H1 (cell line): ENCODE measurements at regions of chr1 and their contacts with region 1.

Region 1: DNA sequence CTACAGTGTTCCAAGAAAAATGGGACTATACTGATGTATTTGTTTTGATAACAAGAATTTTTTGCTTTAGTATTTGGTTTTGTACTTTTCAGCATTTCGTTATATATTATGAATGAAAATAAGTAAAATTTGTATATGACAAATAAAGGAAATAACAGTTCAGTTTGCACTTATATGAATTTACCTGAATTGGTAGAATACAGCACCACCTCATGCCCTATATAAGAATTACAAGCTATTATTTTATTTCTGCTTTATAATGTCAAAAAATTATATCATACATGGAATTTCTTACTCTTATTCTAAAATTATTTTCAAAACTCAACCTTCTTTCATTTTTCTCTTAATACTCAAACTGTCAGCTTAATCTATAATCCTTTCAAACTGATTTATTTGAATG is 14.6 kb downstream of the EFCAB7 start:
- DNase-seq: no peak
- H3K4me3 ChIP-seq: no peak overlapping the region
- H3K27ac ChIP-seq: no peak overlapping the region
- H3K4me1 ChIP-seq: peaks cover 0 to 4% (median 1%) of the 10 kb centered on the region in 4 experiments; a peak in 2 of 7 replicates
- H3K27me3 ChIP-seq: no peaks in the 10 kb centered on the region
- CTCF ChIP-seq: no peak; a peak in 1 of 4 replicates
- EP300 ChIP-seq: no peak
- POLR2A ChIP-seq: no peak
- RAD21 ChIP-seq: peak in 1 of 2 experiments; percentile 30; a peak in 2 of 4 replicates

Region 2: DNA sequence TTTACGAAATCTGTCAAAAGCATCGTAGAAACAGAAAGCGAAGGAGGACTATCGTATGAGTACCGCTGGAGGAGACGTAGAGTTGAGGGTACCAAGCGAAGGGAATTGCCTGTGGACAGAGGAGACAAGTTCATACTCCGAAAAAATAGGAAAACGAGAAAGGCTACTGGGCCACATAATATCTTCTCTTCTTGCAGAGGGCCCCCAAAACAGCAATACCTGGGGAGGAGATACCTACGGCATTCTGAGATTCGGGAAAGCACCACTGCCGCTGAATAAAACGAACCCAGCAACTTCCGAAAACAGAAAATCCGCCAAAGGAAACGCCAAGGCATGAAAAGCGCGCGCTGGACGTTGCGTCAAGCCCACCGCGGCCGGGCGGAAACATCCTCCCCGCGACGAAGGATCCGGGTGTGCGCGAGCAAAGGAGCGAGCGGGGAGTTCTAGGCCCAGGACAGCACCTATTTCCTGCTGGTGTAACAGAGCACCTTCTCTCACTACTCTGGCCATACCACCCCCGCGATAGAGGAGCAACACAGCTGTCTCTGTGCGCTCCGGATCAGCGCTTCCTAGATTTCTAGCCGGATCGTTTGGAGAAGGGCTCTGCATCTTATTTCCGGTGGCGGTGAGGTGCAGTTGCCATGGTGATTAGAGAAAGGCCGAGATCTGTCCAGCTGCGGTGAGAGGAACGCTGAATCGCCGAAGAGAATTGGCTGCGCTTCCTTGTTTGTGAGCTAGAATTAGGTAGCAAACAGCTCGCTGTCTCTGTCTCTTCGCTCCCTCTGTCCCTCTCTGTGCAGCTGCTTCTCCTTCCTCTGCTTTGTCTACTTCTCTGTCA is 14.8 kb before region 1 on chr1 and contains the starts of genes EFCAB7 and ITGB3BP:
- CTCF ChIA-PET with region 1: interaction called, 20 read pairs
- POLR2A ChIA-PET with region 1: interaction called, 6 read pairs
- DNase-seq: peak; percentile 80 to 89
- H3K4me3 ChIP-seq: peak within 1 kb of the TSS; percentile 80 to 94 (median 90)
- H3K27ac ChIP-seq: peak within 1 kb of the TSS; percentile 92
- H3K4me1 ChIP-seq: peaks cover 0 to 7% (median 0%) of the 10 kb centered on the region in 4 experiments; a peak in 2 of 7 replicates
- H3K27me3 ChIP-seq: no peaks in the 10 kb centered on the region
- CTCF ChIP-seq: no peak
- EP300 ChIP-seq: peak in 1 of 2 experiments; percentile 69; a peak in 1 of 3 replicates
- POLR2A ChIP-seq: peak; percentile 60 to 69
- RAD21 ChIP-seq: no peak
- total RNA-seq, gene EFCAB7: 2.5 and 3.1 TPM in 2 replicates
- total RNA-seq, gene ITGB3BP: 43.3 and 49.1 TPM in 2 replicates

Region 3: DNA sequence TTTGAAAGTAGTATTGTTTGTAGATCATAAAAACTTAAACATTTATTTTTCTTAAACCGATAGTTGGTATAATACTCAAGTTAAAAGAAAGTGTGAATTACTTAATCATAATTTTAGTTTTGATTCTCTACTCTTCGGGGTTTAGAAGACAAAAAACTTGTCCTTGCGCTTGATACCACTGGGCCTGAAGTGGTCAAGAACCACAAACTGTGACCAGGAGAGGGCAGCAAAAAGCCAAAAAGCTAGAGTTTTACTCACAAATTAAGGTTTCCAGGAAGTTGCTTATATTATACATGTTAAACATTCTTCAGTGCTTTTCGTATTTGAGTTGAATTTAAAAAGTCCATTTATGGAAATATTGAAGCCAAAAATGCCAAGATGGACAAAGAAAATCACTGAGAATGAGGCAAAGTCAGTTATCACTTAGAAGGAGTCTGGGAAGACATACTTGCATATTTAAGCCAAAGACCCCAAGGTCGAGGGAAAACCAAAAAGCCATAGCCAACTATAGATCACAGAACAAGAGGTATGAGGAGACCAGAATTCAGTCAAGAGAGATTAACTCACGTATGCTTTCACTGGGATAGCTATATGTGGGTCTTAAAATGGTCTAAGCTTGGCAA is 19.5 kb after region 1 on chr1:
- CTCF ChIA-PET with region 1: interaction called, 33 read pairs
- POLR2A ChIA-PET with region 1: no interaction called
- DNase-seq: peak in 1 of 2 experiments; percentile 72
- H3K4me3 ChIP-seq: no peak overlapping the region
- H3K27ac ChIP-seq: no peak overlapping the region
- H3K4me1 ChIP-seq: peaks cover 0 to 4% (median 0%) of the 10 kb centered on the region in 4 experiments; a peak in 1 of 7 replicates
- H3K27me3 ChIP-seq: no peaks in the 10 kb centered on the region
- CTCF ChIP-seq: peak; percentile 12 to 71 (median 71)
- EP300 ChIP-seq: no peak
- POLR2A ChIP-seq: no peak
- RAD21 ChIP-seq: peak; percentile 64 to 76

Region 4: GRCh38 chr1:63601061-63601460 is 63.1 kb after region 1 on chr1:
- CTCF ChIA-PET with region 1: no interaction called
- POLR2A ChIA-PET with region 1: no interaction called
- DNase-seq: no peak
- H3K4me3 ChIP-seq: no peak overlapping the region
- H3K27ac ChIP-seq: no peak overlapping the region
- H3K4me1 ChIP-seq: peaks cover 0 to 4% (median 0%) of the 10 kb centered on the region in 4 experiments; a peak in 2 of 7 replicates
- H3K27me3 ChIP-seq: no peaks in the 10 kb centered on the region; a peak in 1 of 7 replicates
- CTCF ChIP-seq: no peak
- EP300 ChIP-seq: no peak
- POLR2A ChIP-seq: no peak
- RAD21 ChIP-seq: no peak